Heart right ventricle (tissue), 16 donors: ENCODE measurements at regions of chr6 and their contacts with region 1.

Region 1: DNA sequence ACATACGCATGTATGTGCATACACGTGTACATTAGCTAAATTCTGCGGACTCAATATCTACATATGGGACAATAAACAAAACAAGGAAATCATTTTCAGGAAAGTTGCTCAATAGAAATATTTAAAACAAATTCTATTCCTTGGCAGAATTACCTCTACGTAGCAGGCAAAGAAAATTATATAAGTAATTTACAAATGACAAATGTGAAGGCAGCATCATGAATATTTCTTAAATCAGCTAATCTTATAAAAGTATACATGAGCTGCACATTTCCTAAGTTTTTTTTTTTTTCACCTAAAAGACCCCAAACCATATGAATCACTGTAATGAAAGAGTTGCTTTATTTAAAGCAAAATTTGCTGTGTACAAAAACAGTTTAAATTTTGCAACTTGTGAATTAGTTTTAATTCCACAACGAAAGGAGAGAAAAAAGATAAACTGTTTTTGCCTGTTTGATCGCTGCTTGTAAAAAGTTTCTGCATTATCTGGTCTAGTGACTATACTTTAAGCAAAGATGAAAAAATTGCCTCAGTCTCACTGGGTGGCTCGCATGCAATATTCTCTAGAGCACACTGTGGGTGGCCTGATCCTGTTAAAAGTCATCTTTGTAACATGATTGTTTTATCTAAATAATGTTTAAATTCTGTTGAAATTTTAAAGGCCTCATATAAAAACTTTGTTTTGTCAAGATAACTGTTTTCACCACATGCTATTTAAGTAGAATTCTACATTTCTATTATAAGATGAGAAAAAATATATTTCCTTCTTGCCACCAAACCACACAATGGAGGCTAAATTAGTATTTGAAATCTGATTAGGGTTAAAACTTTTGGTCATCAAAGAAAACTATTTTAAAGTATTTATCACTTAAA is 57.1 kb downstream of the HUS1B start:
- DNase-seq: no peak
- ATAC-seq: no peak
- H3K4me3 ChIP-seq: no peak overlapping the region
- H3K27ac ChIP-seq: no peak overlapping the region
- H3K4me1 ChIP-seq: no peaks in the 10 kb centered on the region
- H3K27me3 ChIP-seq: no peaks in the 10 kb centered on the region
- CTCF ChIP-seq: no peak

Region 2: GRCh38 chr6:572596-573265 is 27.1 kb before region 1 on chr6:
- intact Hi-C with region 1: no loop called
- DNase-seq: no peak
- ATAC-seq: no peak
- H3K4me3 ChIP-seq: no peak overlapping the region
- H3K27ac ChIP-seq: no peak overlapping the region
- H3K4me1 ChIP-seq: no peaks in the 10 kb centered on the region
- H3K27me3 ChIP-seq: no peaks in the 10 kb centered on the region
- CTCF ChIP-seq: no peak

Region 3: DNA sequence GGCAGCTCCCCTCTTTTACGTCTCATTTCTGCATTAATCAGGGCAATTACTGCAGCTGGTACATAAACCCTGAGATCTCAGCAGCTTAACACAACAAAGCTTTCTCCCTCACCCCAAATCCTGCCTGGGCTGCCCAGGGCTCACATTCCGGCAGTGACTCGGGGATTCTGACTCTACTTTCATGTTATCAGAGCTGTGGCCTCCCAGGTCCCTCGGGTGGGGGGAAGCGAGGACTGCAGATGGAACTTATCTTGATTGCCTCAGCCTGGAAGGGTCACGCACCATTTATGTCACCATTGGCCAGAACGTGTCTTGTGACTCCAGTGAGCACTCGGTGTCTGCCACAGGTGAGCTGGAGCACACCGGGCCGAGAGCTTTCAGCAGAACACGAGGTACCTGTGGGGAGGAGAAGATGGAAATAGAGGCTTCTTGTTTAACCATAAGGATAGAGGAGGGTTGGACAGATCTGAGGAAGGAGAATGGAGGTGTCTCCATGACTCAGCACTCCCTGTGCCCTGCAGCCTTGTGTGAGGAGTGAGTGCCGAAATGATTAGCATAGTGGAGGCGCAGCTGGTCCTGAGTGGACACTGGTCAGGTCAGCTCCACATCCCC is 181.6 kb after region 1 on chr6:
- intact Hi-C with region 1: loop called in 4 of 10 experiments (anchors 5 to 10 kb)
- DNase-seq: no peak
- ATAC-seq: no peak
- H3K4me3 ChIP-seq: no peak overlapping the region
- H3K27ac ChIP-seq: no peak overlapping the region
- H3K4me1 ChIP-seq: no peaks in the 10 kb centered on the region
- H3K27me3 ChIP-seq: peaks cover 0 to 35% (median 10%) of the 10 kb centered on the region in 7 donors
- CTCF ChIP-seq: no peak

Region 4: GRCh38 chr6:786946-787763 is 187.3 kb after region 1 on chr6:
- intact Hi-C with region 1: loop called in 4 of 10 experiments (anchors 5 to 10 kb)
- DNase-seq: no peak
- ATAC-seq: no peak
- H3K4me3 ChIP-seq: no peak overlapping the region
- H3K27ac ChIP-seq: no peak overlapping the region
- H3K4me1 ChIP-seq: no peaks in the 10 kb centered on the region
- H3K27me3 ChIP-seq: peaks cover 0 to 54% (median 24%) of the 10 kb centered on the region in 7 donors
- CTCF ChIP-seq: peak in 8 of 9 donors; percentile 36 to 64 (median 57)